ENCODE measurements at regions of chr20 and their contacts with region 1.

Region 1: GRCh38 chr20:39049684-39050554 is 87.8 kb downstream of the DHX35 start:
- DNase-seq: no peak
- H3K4me3 ChIP-seq: peak overlapping the region; percentile 54 to 84 (median 64)
- H3K27ac ChIP-seq: peak overlapping the region; percentile 64 to 78 (median 71)
- H3K4me1 ChIP-seq: peaks cover 6 to 27% (median 8%) of the 10 kb centered on the region in 3 donors
- H3K27me3 ChIP-seq: peaks cover 0 to 29% (median 0%) of the 10 kb centered on the region in 4 donors
- CTCF ChIP-seq: peak; percentile 97 to 98 (median 98)
- POLR2A ChIP-seq: peak in 2 of 4 donors; percentile 12 to 23

Region 2: GRCh38 chr20:38645980-38646858 is 403.7 kb before region 1 on chr20:
- intact Hi-C with region 1: loop called (anchors 10 kb)
- DNase-seq: peak; percentile 12
- H3K4me3 ChIP-seq: peak overlapping the region in 2 of 4 donors; percentile 15 to 58
- H3K27ac ChIP-seq: no peak overlapping the region
- H3K4me1 ChIP-seq: peaks cover 0 to 12% (median 8%) of the 10 kb centered on the region in 3 donors
- H3K27me3 ChIP-seq: peaks cover 0 to 87% (median 3%) of the 10 kb centered on the region in 4 donors
- CTCF ChIP-seq: peak; percentile 75 to 97 (median 95)
- POLR2A ChIP-seq: no peak

Region 3: GRCh38 chr20:38926142-38926933 is 123.6 kb before region 1 on chr20 and contains the start of gene FAM83D:
- intact Hi-C with region 1: loop called (anchors 2 kb)
- DNase-seq: peak; percentile 75
- H3K4me3 ChIP-seq: peak within 1 kb of the TSS; percentile 64 to 88 (median 76)
- H3K27ac ChIP-seq: peak within 1 kb of the TSS; percentile 83 to 91 (median 86)
- H3K4me1 ChIP-seq: peaks cover 0 to 61% (median 14%) of the 10 kb centered on the region in 3 donors
- H3K27me3 ChIP-seq: no peaks in the 10 kb centered on the region
- CTCF ChIP-seq: peak in 1 of 6 experiments; percentile 9
- POLR2A ChIP-seq: peak in 3 of 4 donors; percentile 75 to 97 (median 93)
- total RNA-seq, gene FAM83D: 53.8 to 105 (median 81.9) TPM

Region 4: DNA sequence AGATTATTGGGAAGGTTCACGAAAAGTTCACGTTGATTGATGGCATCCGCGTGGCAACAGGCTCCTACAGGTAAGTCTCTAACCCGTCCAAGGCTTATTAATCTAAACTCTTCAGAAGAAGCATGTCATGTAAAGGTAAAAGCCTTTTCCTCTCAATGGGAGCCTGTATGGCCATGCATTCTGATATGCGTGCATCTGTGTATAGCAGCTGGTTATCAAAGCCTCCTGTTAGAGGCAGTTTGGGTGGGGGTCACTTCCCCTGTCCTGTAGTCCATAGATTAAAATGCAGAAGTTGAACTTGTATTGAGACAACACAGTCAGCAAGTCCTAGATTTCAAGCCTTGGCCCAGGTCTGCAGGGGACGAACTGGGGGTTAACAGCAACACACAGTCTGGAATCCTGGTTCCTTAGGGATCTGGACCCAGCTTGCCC is 102.0 kb before region 1 on chr20:
- intact Hi-C with region 1: no loop called
- DNase-seq: no peak
- H3K4me3 ChIP-seq: no peak overlapping the region
- H3K27ac ChIP-seq: peak overlapping the region; percentile 14 to 80 (median 30)
- H3K4me1 ChIP-seq: peaks cover 0 to 33% (median 9%) of the 10 kb centered on the region in 3 donors
- H3K27me3 ChIP-seq: no peaks in the 10 kb centered on the region
- CTCF ChIP-seq: no peak
- POLR2A ChIP-seq: no peak

Region 5: DNA sequence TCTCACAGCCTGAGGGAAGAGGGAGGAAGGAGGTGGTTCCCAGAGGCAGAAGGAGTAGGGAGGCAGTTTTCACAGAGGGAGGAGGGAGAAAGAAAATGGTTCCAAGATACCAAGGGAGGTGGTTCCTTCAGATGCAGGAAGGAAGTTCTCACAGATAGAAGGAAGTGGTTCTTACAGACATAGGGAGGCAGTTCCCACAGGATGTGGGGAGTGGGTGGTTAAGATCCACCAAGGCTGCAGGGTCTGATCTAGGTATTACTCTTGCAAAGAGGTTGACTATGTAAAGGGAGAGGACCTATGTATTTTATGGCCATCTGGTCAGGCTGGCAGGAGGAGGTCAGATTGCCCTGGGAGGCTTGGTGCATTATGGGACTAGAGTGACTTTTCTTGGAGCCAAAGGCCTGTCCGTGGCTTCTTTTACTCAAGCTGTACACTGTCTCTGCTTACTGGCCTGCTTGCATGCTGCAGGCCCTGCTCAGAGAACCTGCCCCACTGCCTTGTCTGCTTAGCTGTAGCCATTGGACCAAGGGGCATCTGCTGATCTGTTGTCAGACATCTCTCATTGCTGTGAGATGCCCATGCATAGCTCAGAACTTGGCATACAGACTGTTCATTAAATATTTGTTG is 195.9 kb after region 1 on chr20:
- intact Hi-C with region 1: no loop called
- DNase-seq: no peak
- H3K4me3 ChIP-seq: no peak overlapping the region
- H3K27ac ChIP-seq: no peak overlapping the region
- H3K4me1 ChIP-seq: no peaks in the 10 kb centered on the region
- H3K27me3 ChIP-seq: peaks cover 0 to 17% (median 0%) of the 10 kb centered on the region in 4 donors
- CTCF ChIP-seq: no peak
- POLR2A ChIP-seq: no peak

Measured in esophagus squamous epithelium (tissue), 5 donors.